Ascending aorta (tissue), 2 donors: ENCODE measurements at regions of chr14 and their contacts with region 1.

Region 1: DNA sequence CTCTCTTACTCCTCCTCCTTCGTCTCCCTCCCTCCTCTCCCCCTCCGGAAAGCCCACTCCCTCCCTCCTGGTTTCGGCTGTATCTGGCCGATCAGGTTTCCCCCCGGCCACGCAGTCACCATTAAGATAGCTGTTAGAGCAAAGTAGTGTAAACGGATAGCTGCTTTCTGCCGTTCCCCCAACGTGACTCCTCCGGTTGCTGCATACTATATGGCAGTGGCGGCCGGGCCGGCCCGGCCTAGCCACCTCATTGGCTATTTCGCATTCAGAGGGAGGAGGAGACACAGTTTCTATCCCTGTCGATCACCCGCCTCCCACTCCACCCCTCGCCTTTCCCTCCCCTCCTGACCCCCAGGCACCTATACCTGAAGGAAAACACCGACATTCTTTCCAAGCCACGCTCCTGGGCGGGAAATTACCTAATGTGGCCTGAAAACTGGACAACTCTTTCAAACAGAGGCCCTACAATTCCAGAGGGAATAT is at the start of gene SIX4:
- DNase-seq: peak; percentile 16 to 83
- H3K4me3 ChIP-seq: peak within 1 kb of the TSS; percentile 75 to 76
- H3K27ac ChIP-seq: peak within 1 kb of the TSS; percentile 73 to 77
- H3K4me1 ChIP-seq: no peaks in the 10 kb centered on the region
- H3K27me3 ChIP-seq: no peaks in the 10 kb centered on the region
- CTCF ChIP-seq: no peak
- total RNA-seq, gene SIX4: 1.4 TPM

Region 2: GRCh38 chr14:60590991-60591414 is 133.2 kb before region 1 on chr14:
- intact Hi-C with region 1: no loop called
- DNase-seq: no peak
- H3K4me3 ChIP-seq: no peak overlapping the region
- H3K27ac ChIP-seq: no peak overlapping the region
- H3K4me1 ChIP-seq: peaks cover 0 to 2% of the 10 kb centered on the region in 2 donors
- H3K27me3 ChIP-seq: no peaks in the 10 kb centered on the region
- CTCF ChIP-seq: no peak

Region 3: GRCh38 chr14:60656686-60657455 is 67.3 kb before region 1 on chr14:
- intact Hi-C with region 1: loop called (anchors 5 kb)
- DNase-seq: no peak
- H3K4me3 ChIP-seq: peak overlapping the region; percentile 74 to 82
- H3K27ac ChIP-seq: peak overlapping the region; percentile 28 to 56
- H3K4me1 ChIP-seq: peaks cover 0 to 21% of the 10 kb centered on the region in 2 donors
- H3K27me3 ChIP-seq: no peaks in the 10 kb centered on the region
- CTCF ChIP-seq: peak in 1 of 3 experiments; percentile 58

Region 4: DNA sequence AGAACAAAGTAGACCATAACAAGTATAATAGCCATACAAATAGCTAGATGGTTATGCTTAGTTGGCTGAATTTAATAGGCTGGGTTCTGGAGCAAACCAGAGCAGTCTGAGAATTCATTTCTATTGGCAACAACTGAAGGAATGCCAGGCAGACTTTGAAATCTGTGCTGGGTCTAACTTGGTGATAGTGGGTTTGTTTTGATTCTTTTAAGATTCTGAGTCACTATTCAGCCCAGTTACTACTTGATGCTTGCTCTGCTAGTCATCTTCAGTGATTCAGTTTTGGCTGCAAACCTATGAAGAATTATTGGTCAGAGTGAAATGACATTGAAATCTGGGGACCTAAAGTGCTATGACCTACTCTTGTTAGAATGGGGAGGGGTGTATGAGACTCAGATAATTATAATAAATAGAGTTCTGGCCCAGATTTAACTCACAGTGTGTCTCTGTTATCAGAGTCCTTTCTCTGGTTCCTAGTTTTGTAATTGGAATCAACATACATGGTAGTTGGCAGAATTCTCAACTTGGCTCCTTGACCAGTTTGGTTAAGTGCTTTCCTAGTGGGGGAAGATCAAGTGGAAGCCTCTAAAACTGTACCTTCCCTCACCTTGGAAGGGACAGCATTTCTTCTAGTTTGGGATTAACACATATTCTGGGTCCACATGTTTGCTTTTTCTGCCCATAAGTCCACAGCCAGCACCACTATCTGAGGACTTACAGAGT is 53.8 kb after region 1 on chr14:
- intact Hi-C with region 1: loop called (anchors 5 kb)
- DNase-seq: no peak
- H3K4me3 ChIP-seq: no peak overlapping the region
- H3K27ac ChIP-seq: peak overlapping the region; percentile 27 to 39
- H3K4me1 ChIP-seq: peaks cover 0 to 4% of the 10 kb centered on the region in 2 donors
- H3K27me3 ChIP-seq: no peaks in the 10 kb centered on the region
- CTCF ChIP-seq: no peak